Natural killer cell (primary cell): ENCODE measurements at regions of chr19 and their contacts with region 1.

Region 1: GRCh38 chr19:4342615-4343369 is 570 bp upstream of the MPND start:
- DNase-seq: peak; percentile 87 to 98
- ATAC-seq: peak; percentile 79 to 92 (median 80)
- H3K4me3 ChIP-seq: peak overlapping the region; percentile 90
- H3K4me3 Mint-ChIP-seq: peak overlapping the region; percentile 93
- H3K27ac ChIP-seq: peak overlapping the region; percentile 89
- H3K27ac Mint-ChIP-seq: peak overlapping the region; percentile 79 to 92
- H3K4me1 ChIP-seq: peaks cover 51% of the 10 kb centered on the region
- H3K4me1 Mint-ChIP-seq: peaks cover 24 to 59% of the 10 kb centered on the region in 2 donors
- H3K27me3 ChIP-seq: no peaks in the 10 kb centered on the region
- H3K27me3 Mint-ChIP-seq: no peaks in the 10 kb centered on the region
- CTCF ChIP-seq: peak; percentile 27

Region 2: DNA sequence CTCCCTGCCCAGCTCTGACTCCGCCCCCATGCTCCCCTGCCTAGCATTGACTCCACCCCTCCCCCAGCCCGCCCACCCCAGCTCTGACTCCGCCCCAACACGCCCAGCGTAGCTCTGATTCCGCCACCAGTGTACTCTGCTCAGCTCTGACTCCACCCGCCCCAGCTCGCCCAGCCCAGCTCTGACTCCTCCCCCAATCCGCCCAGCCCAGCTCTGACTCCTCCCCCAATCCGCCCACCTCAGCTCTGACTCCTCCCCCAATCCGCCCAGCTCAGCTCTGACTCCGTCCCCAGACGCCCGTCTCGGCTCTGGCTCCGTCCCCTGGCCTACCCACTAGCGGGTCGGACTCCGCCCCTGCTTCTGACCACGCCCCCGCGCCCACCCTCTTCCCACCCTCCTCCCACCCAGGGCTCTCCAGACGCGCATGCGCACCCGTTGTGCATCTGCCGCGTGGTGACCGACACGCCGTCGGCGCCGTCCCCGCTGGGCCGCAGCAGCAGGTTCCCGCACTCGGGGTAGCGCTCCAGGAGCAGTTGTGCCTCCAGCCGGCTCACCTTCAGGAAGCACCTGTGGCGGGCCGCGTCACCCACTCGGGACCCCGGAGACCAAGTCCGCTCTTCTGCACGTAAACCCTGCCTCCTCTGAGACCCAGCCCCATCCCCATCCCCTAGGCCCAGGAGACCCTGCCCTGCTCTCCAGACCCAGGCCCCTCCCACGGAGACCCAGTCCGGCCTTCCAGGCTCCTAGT is 14.4 kb before region 1 on chr19:
- intact Hi-C with region 1: loop called (anchors 1 kb)
- DNase-seq: peak; percentile 92 to 96
- ATAC-seq: peak; percentile 85 to 96 (median 86)
- H3K4me3 ChIP-seq: peak overlapping the region; percentile 60
- H3K4me3 Mint-ChIP-seq: peak overlapping the region; percentile 90
- H3K27ac ChIP-seq: peak overlapping the region; percentile 39
- H3K27ac Mint-ChIP-seq: peak overlapping the region; percentile 73 to 92
- H3K4me1 ChIP-seq: peaks cover 30% of the 10 kb centered on the region
- H3K4me1 Mint-ChIP-seq: peaks cover 16 to 33% of the 10 kb centered on the region in 2 donors
- H3K27me3 ChIP-seq: no peaks in the 10 kb centered on the region
- H3K27me3 Mint-ChIP-seq: no peaks in the 10 kb centered on the region
- CTCF ChIP-seq: no peak

Region 3: DNA sequence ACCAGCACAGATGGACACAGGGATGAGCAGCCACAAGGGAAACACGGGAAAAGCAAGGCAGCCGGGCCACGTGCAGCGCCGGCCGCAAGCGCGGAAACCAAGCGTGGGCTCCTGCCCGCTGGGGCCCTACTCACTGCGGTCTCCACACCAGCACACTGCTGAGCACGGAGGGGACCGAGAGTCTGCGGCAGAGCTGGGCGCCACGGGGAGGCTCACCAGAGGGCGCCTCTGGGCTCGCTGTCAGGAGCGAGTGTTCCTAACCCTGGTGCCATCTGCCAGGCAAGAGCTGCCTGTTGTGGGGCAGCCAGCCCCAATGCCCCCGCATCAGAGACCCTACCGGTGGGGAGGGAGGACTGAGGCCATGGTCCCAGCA is 27.1 kb after region 1 on chr19:
- intact Hi-C with region 1: no loop called
- DNase-seq: peak; percentile 69 to 82
- ATAC-seq: peak; percentile 77 to 87 (median 86)
- H3K4me3 ChIP-seq: peak overlapping the region; percentile 43
- H3K4me3 Mint-ChIP-seq: peak overlapping the region; percentile 92
- H3K27ac ChIP-seq: peak overlapping the region; percentile 85
- H3K27ac Mint-ChIP-seq: peak overlapping the region; percentile 93
- H3K4me1 ChIP-seq: peaks cover 74% of the 10 kb centered on the region
- H3K4me1 Mint-ChIP-seq: peaks cover 30 to 56% of the 10 kb centered on the region in 2 donors
- H3K27me3 ChIP-seq: no peaks in the 10 kb centered on the region
- H3K27me3 Mint-ChIP-seq: no peaks in the 10 kb centered on the region
- CTCF ChIP-seq: peak; percentile 29